ENCODE measurements at regions of chr4 and their contacts with region 1.

Region 1: DNA sequence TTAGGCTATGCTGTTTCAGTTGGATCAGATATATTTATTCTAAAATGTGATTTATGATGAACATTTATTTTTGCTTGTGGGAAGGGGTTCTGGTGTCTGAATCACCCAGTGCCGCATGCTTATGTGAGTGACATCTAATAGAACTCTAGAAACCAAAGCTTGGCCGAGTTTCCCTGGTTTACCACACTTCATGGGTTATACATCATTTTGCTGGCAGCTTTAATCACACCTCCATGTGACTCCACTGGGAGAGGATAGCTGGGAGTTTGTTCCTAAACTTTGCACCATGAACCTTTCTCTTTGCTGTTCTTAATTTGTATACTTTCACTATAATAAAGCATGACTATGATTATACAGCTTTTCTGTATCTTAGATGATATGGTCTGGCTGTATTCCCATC is 382.9 kb downstream of the INPP4B start:
- DNase-seq: no peak
- H3K4me3 ChIP-seq: no peak overlapping the region
- H3K27ac ChIP-seq: no peak overlapping the region
- H3K4me1 ChIP-seq: peaks cover 10% of the 10 kb centered on the region; the same call in 1 of the 2 replicates
- H3K27me3 ChIP-seq: no peaks in the 10 kb centered on the region
- CTCF ChIP-seq: no peak

Region 2: GRCh38 chr4:142211424-142211823 is 251.8 kb before region 1 on chr4:
- CTCF ChIA-PET with region 1: interaction called, 14 read pairs
- POLR2A ChIA-PET with region 1: no interaction called
- intact Hi-C with region 1: no loop called
- DNase-seq: no peak
- H3K4me3 ChIP-seq: no peak overlapping the region
- H3K27ac ChIP-seq: no peak overlapping the region
- H3K4me1 ChIP-seq: no peaks in the 10 kb centered on the region
- H3K27me3 ChIP-seq: no peaks in the 10 kb centered on the region
- CTCF ChIP-seq: no peak